Psoas muscle (tissue), 8 donors: ENCODE measurements at regions of chr9 and their contacts with region 1.

Region 1: DNA sequence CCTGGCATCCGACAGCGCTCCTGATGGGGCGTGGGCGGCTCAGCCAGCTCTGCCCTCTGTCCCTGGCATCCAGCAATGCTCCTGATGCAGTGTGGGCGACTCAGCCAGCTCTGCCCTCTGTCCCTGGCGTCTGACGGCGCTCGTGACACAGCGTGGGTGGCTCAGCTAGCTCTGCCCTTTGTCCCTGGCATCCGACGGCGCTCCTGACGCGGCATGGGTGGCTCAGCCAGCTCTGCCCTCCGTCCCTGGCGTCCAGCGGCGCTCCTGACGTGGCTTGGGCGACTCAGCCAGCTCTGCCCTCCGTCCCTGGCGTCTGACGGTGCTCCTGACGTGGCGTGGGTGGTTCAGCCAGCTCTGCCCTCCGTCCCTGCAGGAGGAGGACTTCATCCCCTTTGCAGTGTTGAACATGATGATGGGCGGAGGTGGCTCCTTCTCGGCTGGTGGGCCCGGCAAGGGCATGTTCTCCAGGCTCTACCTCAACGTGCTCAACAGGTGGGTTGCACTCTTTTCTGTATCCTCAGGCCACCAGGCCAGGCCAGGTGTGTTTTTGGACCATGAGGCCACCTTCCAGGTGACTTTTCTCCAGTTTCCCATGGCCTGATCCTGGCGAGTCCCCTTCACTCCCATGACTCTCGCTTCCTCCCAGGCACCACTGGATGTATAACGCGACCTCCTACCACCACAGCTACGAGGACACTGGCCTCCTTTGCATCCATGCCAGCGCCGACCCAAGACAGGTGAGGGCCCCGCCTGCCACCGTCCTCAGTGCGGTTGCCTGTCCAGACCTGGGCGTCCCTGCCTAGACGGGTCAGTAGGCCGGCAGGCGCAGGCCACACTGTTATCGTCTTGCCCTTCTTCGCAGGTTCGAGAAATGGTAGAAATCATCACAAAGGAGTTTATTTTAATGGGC is 8.0 kb downstream of the PMPCA start:
- DNase-seq: peak in 1 of 2 donors; percentile 47
- ATAC-seq: peak in 3 of 4 donors; percentile 7 to 14 (median 12)
- H3K4me3 ChIP-seq: no peak overlapping the region
- H3K27ac ChIP-seq: no peak overlapping the region
- H3K4me1 ChIP-seq: no peaks in the 10 kb centered on the region
- H3K27me3 ChIP-seq: no peaks in the 10 kb centered on the region
- CTCF ChIP-seq: no peak

Region 2: DNA sequence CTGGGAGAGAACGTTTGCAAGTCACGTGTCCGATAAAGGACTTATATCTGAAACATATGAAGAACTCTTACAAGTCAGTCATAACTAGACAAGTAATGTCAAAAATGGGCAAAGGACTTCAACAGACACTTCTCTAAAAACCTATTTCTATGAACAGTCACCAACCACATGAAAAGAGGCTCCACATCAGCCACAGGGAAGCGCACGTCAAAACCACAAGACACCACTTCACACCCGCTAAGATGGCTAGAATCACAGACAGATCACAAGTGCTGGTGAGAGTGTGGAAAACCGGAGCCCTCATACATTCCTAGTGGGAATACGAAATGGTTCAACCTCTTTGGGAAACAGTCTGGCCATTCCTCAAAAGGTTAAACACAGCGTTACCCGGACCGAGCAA is 33.4 kb before region 1 on chr9:
- intact Hi-C with region 1: loop called in 1 of 2 experiments (anchors 1 kb)
- DNase-seq: no peak
- ATAC-seq: no peak
- H3K4me3 ChIP-seq: no peak overlapping the region
- H3K27ac ChIP-seq: no peak overlapping the region
- H3K4me1 ChIP-seq: no peaks in the 10 kb centered on the region
- H3K27me3 ChIP-seq: no peaks in the 10 kb centered on the region
- CTCF ChIP-seq: no peak